ENCODE measurements at regions of chr5 and their contacts with region 1.

Region 1: GRCh38 chr5:133968049-133968980 is at the start of gene C5orf15:
- DNase-seq: peak; percentile 97
- H3K4me3 ChIP-seq: peak within 1 kb of the TSS; percentile 65 to 86 (median 74)
- H3K27ac ChIP-seq: peak within 1 kb of the TSS; percentile 45
- H3K4me1 ChIP-seq: peaks cover 7% of the 10 kb centered on the region
- H3K27me3 ChIP-seq: no peaks in the 10 kb centered on the region
- CTCF ChIP-seq: peak in 1 of 2 donors; percentile 9
- POLR2A ChIP-seq: peak; percentile 78
- total RNA-seq, gene C5orf15: 24.8 and 25.3 TPM in 2 replicates

Region 2: DNA sequence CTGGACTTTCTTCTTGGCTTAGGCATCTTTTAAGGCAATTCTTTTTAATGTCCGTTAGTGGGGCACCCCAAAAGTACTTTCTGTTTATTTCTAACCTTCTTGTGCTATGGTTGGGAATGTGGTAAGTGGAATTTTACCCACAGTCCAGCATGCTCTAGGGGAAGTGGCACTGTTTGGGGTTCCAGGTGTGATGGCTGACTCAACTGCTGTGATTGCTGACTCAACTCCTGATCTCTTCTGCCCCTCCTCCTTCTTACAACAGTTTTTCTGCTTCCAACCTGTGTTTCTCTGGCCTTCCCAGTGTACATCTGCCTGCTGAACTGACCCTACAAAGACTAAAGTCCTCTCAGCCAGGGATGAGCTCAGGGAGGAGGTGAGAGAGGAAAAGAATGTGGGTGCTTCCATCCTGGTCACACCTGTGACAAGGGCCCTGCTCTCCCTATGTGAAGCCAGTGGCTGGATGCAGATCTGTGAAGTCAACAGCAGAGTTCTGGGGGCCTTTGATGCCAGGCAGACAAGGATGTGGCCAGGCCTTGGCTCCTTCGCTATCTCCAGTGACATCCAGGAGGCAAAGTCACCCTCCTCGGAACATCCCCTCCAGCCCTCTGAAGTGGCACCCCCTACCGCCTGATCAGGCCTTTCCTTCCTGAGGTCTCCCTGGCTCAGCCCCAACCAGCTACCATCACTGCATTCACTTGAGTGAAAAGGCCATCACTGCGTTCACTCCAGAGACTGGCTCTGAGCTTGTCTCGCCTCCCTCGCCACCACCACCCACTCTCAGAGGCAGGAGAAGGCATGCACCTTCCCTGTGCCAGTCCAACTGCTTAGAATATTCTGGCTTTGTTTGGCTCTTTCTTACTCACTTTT is 72.1 kb before region 1 on chr5:
- CTCF ChIA-PET with region 1: no interaction called
- POLR2A ChIA-PET with region 1: no interaction called
- dilution Hi-C with region 1: no loop called
- intact Hi-C with region 1: no loop called
- DNase-seq: no peak
- H3K4me3 ChIP-seq: no peak overlapping the region
- H3K27ac ChIP-seq: no peak overlapping the region
- H3K4me1 ChIP-seq: no peaks in the 10 kb centered on the region
- H3K27me3 ChIP-seq: peaks cover 6 to 9% of the 10 kb centered on the region in 2 experiments
- CTCF ChIP-seq: no peak
- POLR2A ChIP-seq: no peak

Region 3: DNA sequence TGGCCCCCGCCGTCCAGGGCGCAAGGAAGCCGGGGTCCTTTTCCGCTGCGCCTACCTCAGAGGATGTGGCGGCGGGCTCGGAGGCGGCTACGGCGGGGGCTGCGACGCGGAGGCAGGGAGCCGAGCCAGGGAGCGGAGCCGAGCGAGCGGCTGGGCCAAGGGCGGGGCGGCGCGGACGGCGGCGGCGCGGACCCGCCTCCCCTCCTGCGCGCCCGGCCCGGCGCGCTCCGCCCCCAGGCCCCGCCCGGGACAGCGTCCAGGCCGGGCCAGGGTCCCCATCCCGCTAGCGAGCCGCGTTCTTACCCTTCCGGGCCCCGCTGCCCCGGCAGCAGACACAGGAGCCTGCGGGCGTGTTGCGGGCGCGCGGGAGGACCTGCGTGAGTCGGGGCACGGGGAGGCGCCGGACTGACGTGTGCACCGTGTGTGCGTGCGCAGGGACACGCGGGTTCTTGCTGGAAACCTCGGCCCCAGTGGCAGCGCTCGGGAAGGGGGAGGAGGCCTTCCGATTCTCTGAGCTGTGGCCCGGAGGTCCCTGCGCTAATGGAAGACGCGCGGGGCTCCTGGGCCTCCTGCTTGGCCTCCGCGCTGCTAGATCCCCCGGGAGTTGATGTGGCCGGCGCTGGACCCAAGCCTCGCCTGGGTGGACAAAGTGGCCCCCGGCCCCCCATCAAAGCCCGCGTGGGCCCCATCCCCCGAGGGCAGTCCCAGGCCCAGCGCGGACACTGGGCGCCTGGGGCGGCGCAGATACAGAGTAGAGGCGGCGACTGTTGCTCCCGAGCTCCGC is 36.5 kb after region 1 on chr5 and contains the start of gene VDAC1:
- CTCF ChIA-PET with region 1: no interaction called
- POLR2A ChIA-PET with region 1: no interaction called
- dilution Hi-C with region 1: no loop called
- intact Hi-C with region 1: loop called (anchors 2 kb)
- DNase-seq: peak; percentile 85
- H3K4me3 ChIP-seq: peak within 1 kb of the TSS; percentile 48 to 95 (median 95)
- H3K27ac ChIP-seq: peak within 1 kb of the TSS; percentile 93
- H3K4me1 ChIP-seq: peaks cover 21% of the 10 kb centered on the region
- H3K27me3 ChIP-seq: no peaks in the 10 kb centered on the region
- CTCF ChIP-seq: no peak
- POLR2A ChIP-seq: peak; percentile 88
- total RNA-seq, gene VDAC1: 247 and 253 TPM in 2 replicates